Caco-2 (cell line): ENCODE measurements at regions of chr7 and their contacts with region 1.

Region 1: DNA sequence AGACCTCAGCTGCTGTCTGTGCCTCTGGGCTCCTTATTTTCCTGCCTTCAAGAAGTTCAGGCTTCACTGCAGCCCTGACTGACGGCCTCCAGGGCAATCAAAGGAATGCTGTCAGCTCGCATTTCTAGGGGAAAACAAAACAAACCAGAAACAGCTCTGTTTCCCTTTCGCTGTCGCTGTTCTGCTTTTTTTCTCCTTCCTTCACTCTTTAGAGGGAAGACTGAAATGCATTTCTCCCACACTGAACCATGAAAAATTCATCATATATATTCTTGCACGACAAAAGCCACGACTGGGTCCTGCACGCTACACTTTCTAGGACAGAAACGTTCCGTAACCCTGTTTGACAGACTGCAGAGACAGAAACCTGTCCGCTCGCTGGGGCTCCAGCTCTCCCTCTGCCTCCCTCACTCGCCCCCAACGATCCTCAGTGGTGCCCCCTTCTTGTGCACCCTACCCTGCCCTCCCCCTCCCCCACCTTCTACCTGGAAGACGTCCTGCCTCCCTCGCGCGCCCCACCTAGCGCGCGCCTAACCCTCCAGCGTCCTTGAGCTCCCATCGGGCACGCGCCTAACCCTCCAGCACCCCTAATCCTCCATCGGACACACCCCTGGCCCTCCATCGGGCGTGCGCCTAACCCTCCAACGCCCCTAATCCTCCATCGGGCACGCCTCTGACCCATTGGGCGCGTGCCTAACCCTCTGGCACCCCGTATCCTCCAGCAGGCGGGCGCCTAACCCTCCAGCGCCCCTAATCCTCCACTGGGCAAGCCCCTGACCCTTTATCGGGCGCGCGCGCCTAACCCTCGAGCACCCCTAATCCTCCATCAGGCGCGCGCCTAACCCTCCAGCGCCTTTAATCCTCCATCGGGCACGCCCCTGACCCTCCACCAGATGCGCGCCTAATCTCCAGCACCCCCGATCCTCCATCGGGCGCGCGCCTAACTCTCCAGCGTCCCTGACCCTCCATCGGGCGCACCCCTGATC is 37.1 kb downstream of the SVOPL start:
- DNase-seq: peak; percentile 60 to 76
- H3K4me3 ChIP-seq: no peak overlapping the region
- H3K4me3 Mint-ChIP-seq: peak overlapping the region; percentile 30
- H3K27ac Mint-ChIP-seq: peak overlapping the region; percentile 48
- H3K4me1 ChIP-seq: peaks cover 61% of the 10 kb centered on the region
- H3K4me1 Mint-ChIP-seq: peaks cover 50% of the 10 kb centered on the region
- H3K27me3 ChIP-seq: no peaks in the 10 kb centered on the region
- H3K27me3 Mint-ChIP-seq: no peaks in the 10 kb centered on the region
- CTCF ChIP-seq: no peak

Region 2: DNA sequence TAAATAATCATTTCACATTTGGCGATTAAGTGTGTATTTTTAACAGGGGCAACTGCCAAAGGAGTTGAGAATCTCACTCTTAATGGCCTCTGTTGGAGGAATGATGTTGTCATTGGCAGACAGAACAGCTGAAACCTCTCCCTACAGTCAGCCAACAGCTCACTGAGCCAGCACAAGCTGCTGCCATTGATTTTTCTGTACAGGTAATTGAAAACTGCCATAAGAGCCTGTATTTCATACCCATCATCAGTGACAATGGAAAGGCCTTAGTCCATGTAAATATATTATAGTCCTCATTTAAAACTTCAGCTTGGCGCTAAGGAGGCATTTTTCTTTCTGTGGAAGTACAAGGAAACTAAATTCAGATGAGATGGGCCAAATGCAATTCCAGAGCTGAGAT is 1292.4 kb before region 1 on chr7:
- CTCF ChIA-PET with region 1: no interaction called
- POLR2A ChIA-PET with region 1: no interaction called
- intact Hi-C with region 1: no loop called
- DNase-seq: no peak
- H3K4me3 ChIP-seq: no peak overlapping the region
- H3K4me3 Mint-ChIP-seq: no peak overlapping the region
- H3K27ac Mint-ChIP-seq: no peak overlapping the region
- H3K4me1 ChIP-seq: no peaks in the 10 kb centered on the region
- H3K4me1 Mint-ChIP-seq: no peaks in the 10 kb centered on the region
- H3K27me3 ChIP-seq: no peaks in the 10 kb centered on the region
- H3K27me3 Mint-ChIP-seq: no peaks in the 10 kb centered on the region
- CTCF ChIP-seq: no peak

Region 3: DNA sequence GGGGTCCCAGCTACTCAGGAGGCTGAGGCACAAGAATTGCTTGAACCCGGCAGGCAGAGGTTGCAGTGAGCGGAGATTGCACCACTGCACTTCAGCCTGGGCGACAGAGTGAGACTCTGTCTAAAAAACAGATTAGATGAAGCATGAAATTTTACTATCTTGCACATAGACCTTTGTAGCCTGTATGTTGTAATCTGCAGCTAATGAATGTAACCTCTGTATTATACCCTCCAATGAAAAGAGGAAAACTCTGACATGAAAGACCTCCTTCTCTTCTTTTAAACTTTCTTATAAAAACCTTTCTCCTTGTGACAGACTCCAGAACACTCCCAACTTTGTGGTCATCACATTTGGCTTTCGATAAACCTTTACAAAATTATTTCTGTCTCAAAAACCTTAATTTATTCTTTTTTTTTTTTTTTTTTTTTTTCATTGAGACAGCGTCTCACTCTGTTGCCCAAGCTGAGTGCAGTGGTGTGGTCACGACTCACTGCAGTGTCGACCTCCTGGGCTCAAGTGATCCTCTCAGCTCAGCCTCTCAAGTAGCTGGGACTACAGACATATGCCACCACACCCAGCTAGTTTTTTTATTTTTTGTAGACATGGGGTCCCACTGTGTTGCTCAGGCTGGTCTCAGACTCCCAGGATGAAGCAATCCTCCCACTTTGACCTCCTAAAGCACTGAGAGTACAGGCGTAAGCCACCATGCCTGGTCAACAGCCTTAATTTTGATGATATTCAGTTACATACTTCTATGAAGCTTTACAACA is 60.3 kb before region 1 on chr7:
- CTCF ChIA-PET with region 1: no interaction called
- POLR2A ChIA-PET with region 1: no interaction called
- intact Hi-C with region 1: loop called (anchors 5 kb)
- DNase-seq: no peak
- H3K4me3 ChIP-seq: no peak overlapping the region
- H3K4me3 Mint-ChIP-seq: no peak overlapping the region
- H3K27ac Mint-ChIP-seq: no peak overlapping the region
- H3K4me1 ChIP-seq: no peaks in the 10 kb centered on the region
- H3K4me1 Mint-ChIP-seq: peaks cover 18% of the 10 kb centered on the region
- H3K27me3 ChIP-seq: no peaks in the 10 kb centered on the region
- H3K27me3 Mint-ChIP-seq: no peaks in the 10 kb centered on the region
- CTCF ChIP-seq: no peak

Region 4: GRCh38 chr7:138961159-138961558 is 297.1 kb after region 1 on chr7:
- CTCF ChIA-PET with region 1: no interaction called
- POLR2A ChIA-PET with region 1: no interaction called
- intact Hi-C with region 1: no loop called
- DNase-seq: no peak
- H3K4me3 ChIP-seq: no peak overlapping the region
- H3K4me3 Mint-ChIP-seq: no peak overlapping the region
- H3K27ac Mint-ChIP-seq: no peak overlapping the region
- H3K4me1 ChIP-seq: no peaks in the 10 kb centered on the region
- H3K4me1 Mint-ChIP-seq: no peaks in the 10 kb centered on the region
- H3K27me3 ChIP-seq: no peaks in the 10 kb centered on the region
- H3K27me3 Mint-ChIP-seq: no peaks in the 10 kb centered on the region
- CTCF ChIP-seq: no peak